Activated CD4-positive, alpha-beta memory T cell treated with anti-CD3 and anti-CD28 coated beads for 36 hours (primary cell): ENCODE measurements at regions of chr16 and their contacts with region 1.

Region 1: GRCh38 chr16:68085259-68086071 is at the start of gene NFATC3:
- DNase-seq: peak; percentile 99
- H3K4me3 Mint-ChIP-seq: peak within 1 kb of the TSS; percentile 86
- H3K27ac Mint-ChIP-seq: peak within 1 kb of the TSS; percentile 98
- H3K4me1 Mint-ChIP-seq: peaks cover 62% of the 10 kb centered on the region
- H3K27me3 Mint-ChIP-seq: no peaks in the 10 kb centered on the region
- total RNA-seq, gene NFATC3: 83.4 to 85.2 TPM

Region 2: DNA sequence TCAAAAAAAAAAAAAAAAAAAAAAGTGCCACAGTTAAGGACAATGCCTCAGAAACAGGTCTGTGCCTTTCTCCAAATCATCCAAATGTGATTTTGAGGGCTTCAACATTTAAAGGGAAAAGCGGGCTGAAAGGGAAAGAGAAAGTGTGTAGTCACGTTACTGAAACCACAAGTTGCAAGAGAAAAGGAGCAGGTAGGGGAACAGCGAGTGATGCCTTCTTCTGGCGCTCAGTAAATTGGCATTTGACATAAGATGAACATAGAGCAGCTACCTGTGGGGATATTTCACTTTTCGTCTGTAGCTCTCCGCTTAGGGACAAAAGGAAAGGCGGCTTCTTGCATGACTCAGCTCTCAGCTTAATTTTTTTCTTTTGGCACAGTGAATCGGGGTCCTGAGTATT is 1495.1 kb before region 1 on chr16:
- CTCF ChIA-PET with region 1: no interaction called
- POLR2A ChIA-PET with region 1: no interaction called
- intact Hi-C with region 1: no loop called
- DNase-seq: peak; percentile 43
- H3K4me3 Mint-ChIP-seq: peak overlapping the region; percentile 64
- H3K27ac Mint-ChIP-seq: peak overlapping the region; percentile 28
- H3K4me1 Mint-ChIP-seq: peaks cover 32% of the 10 kb centered on the region
- H3K27me3 Mint-ChIP-seq: no peaks in the 10 kb centered on the region

Region 3: DNA sequence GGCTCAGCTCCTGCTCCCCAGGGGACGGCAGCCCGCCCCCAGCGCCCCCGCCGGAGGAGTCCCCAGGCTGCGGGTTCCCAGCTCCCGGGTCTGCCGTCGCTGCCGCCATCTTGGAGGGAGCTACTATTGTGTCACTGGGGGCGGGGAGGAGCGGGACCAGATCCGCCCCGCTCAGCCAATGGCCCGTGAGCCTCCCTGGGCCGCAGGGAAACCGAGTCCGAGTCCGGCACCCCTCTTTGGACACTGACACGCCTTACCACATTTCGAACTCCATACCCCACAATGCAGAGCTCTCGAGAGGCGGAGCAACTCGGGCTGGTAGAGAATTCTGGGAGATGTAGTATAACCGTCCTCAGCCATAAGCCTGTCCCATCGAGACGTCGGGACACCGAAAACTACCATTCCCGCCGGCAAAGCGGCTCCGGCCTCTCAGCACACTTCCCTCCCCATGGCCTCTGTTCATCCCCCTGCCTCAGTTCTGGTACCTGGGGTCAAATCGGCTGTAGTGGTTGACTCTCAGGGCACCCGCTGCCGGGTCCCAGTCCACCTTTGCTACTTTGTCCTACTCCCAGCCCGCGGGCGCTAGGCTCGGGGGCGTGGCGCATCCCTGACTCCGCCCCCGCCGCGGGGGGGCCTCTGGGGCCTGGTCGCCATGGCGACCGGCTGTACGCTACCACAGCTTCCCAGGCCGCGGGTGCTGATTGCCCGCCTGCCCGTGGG is 278.9 kb before region 1 on chr16 and contains the starts of genes RANBP10 and TSNAXIP1:
- CTCF ChIA-PET with region 1: no interaction called
- POLR2A ChIA-PET with region 1: no interaction called
- intact Hi-C with region 1: loop called (anchors 5 kb)
- DNase-seq: peak; percentile 98
- H3K4me3 Mint-ChIP-seq: peak within 1 kb of the TSS; percentile 93
- H3K27ac Mint-ChIP-seq: peak within 1 kb of the TSS; percentile 91
- H3K4me1 Mint-ChIP-seq: peaks cover 39% of the 10 kb centered on the region
- H3K27me3 Mint-ChIP-seq: no peaks in the 10 kb centered on the region
- total RNA-seq, gene RANBP10: 14.9 to 18.1 TPM
- total RNA-seq, gene TSNAXIP1: 0.77 to 0.81 TPM

Region 4: GRCh38 chr16:67926181-67926746 is 159.2 kb before region 1 on chr16:
- CTCF ChIA-PET with region 1: no interaction called
- POLR2A ChIA-PET with region 1: no interaction called
- intact Hi-C with region 1: no loop called
- DNase-seq: no peak
- H3K4me3 Mint-ChIP-seq: no peak overlapping the region
- H3K27ac Mint-ChIP-seq: peak overlapping the region; percentile 58
- H3K4me1 Mint-ChIP-seq: peaks cover 12% of the 10 kb centered on the region
- H3K27me3 Mint-ChIP-seq: no peaks in the 10 kb centered on the region

Region 5: DNA sequence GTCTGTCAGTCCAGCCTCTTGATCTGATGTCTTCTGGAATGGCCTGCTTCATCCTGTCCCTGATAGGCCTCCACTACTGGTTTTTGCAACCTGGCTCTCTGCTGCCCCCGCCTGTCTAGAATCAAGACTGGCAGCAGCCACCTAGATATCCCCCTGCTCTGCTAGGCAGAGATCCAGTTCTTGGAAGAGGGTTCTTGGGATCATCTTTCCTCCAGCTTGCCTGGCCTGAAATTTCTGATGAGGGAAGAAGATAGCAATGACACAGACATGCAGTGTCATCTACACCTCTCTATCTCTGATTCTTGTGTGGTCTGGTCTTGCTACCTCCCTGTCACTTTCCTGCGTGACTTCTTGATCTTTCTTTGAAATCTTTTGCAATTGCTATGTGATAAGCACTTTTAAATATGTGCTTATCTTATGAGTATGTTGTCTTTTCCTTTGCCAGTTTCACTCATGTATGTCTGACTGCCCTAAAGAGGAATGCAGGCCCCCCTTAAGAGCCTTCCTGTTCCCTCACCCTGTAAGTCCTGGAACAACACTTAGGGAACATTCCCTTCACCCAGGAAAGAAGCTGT is 20.6 kb before region 1 on chr16:
- CTCF ChIA-PET with region 1: interaction called, 17 read pairs
- POLR2A ChIA-PET with region 1: interaction called, 15 read pairs
- intact Hi-C with region 1: loop called (anchors 2 kb)
- DNase-seq: peak; percentile 83
- H3K4me3 Mint-ChIP-seq: no peak overlapping the region
- H3K27ac Mint-ChIP-seq: peak overlapping the region; percentile 74
- H3K4me1 Mint-ChIP-seq: peaks cover 57% of the 10 kb centered on the region
- H3K27me3 Mint-ChIP-seq: no peaks in the 10 kb centered on the region

Region 6: GRCh38 chr16:68116256-68116867 is 30.9 kb after region 1 on chr16:
- CTCF ChIA-PET with region 1: interaction called, 8 read pairs
- POLR2A ChIA-PET with region 1: interaction called, 6 read pairs
- intact Hi-C with region 1: loop called (anchors 2 kb)
- DNase-seq: no peak
- H3K4me3 Mint-ChIP-seq: no peak overlapping the region
- H3K27ac Mint-ChIP-seq: peak overlapping the region; percentile 33
- H3K4me1 Mint-ChIP-seq: peaks cover 85% of the 10 kb centered on the region
- H3K27me3 Mint-ChIP-seq: no peaks in the 10 kb centered on the region